Thyroid gland (tissue), 4 donors: ENCODE measurements at regions of chr11 and their contacts with region 1.

Region 1: DNA sequence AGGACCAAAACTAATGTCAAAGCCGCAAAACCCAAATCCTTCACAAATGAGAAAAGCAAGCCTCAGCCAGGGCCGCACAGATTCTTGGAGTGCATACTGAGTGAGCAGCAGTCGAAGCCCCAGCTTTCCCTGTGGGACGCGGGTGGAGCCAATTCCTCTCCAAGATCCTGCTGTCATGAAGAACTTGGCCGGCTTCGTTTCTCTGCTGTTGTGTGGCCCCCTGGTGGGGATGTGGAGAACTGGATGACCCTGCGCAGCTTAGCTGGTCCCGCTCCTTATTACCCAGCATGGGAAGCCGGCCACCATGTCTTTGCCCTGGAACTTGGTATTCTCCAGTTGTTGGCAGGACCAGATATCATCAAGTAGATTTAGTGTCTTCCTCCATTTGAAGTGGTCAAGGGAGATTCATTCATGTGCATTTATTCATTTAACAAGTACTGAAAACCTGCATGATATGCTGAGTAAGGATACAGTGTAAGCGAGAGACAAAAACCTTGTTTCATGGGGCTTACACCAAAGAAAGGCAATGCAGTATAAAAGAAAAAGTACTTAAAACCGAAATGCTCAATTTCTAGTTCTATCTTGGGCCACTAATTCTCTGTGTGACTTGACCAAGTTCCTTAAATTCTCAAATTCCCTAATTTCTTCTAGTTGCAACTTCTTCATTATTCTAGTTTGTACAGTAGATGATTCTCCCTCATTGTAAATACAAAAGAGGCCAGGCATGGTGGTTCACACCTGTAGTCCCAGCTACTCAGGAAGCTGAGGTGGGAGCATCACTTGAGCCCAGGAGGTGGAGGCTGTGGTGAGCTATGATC is 56.7 kb upstream of the CRTAM start:
- DNase-seq: peak; percentile 91 to 92
- H3K4me3 ChIP-seq: no peak overlapping the region
- H3K27ac ChIP-seq: no peak overlapping the region
- H3K4me1 ChIP-seq: peaks cover 0 to 6% of the 10 kb centered on the region in 2 donors
- H3K27me3 ChIP-seq: no peaks in the 10 kb centered on the region
- CTCF ChIP-seq: peak; percentile 82 to 96 (median 91)
- POLR2A ChIP-seq: no peak

Region 2: GRCh38 chr11:122578168-122578825 is 203.3 kb before region 1 on chr11:
- intact Hi-C with region 1: loop called (anchors 2 kb)
- DNase-seq: no peak
- H3K4me3 ChIP-seq: no peak overlapping the region
- H3K27ac ChIP-seq: no peak overlapping the region
- H3K4me1 ChIP-seq: peaks cover 4 to 5% of the 10 kb centered on the region in 2 donors
- H3K27me3 ChIP-seq: no peaks in the 10 kb centered on the region
- CTCF ChIP-seq: no peak
- POLR2A ChIP-seq: no peak

Region 3: DNA sequence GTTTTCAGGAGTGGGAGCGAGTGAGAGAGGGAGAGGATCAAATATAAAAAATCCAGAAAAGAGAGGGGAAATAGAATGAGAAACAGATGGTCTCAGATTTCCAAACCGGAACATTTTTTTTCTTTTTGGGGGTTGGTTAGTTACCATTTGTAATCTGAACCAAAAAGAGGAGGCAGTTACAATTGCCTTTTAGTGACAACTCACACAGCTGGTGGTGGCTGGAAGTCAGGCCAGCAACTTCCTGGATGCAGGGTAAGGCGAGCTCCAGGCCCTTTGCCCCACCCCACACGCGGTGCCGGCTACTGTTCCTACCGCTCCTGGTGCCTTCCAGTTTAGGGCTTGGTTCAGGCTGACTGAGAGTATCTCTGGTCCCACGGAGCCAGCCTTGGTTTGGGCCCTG is 147.1 kb before region 1 on chr11:
- intact Hi-C with region 1: loop called (anchors 2 kb)
- DNase-seq: no peak
- H3K4me3 ChIP-seq: no peak overlapping the region
- H3K27ac ChIP-seq: no peak overlapping the region
- H3K4me1 ChIP-seq: peaks cover 0 to 3% of the 10 kb centered on the region in 2 donors
- H3K27me3 ChIP-seq: no peaks in the 10 kb centered on the region
- CTCF ChIP-seq: no peak
- POLR2A ChIP-seq: no peak

Region 4: DNA sequence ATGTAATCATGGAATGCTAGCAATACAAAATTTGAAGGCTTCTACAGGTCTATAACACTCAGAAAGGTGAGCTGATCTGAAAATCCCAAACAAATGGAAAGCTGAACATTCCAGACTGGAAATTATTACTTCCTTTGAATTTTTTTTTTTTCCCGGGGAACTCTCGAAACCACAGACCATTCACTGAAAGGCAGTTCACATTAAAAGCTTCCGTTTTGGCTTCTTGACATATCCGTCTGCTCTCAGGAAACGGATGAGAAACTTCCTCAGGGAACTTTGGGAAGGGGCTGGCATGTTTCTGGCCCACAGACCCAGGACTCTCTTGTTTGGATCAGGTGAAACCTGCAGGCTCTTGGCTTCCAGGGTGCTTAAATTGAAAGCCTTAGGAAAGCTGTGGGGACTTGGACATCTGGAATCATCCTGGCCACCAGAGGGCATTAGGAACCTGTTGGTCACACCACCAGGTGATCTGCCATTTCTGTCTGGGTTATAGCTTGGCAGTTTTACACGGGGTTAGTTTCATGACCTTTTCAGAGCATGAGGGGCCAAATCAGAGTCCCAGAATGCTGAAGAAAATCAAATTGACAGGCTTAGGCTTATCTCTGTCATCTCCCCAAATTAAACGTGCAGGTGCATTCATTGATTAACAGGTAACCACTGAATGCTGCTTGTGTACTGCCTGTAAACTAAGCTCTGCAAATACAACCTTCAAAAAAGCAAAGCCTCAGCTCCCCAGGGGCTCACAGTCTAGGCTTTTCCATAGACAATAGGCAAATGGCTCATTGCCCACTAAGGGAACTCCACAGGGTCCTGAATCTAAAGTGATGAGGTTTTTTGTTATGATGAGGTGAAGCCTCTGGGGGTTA is 625.8 kb after region 1 on chr11:
- intact Hi-C with region 1: no loop called
- DNase-seq: peak; percentile 81 to 82
- H3K4me3 ChIP-seq: no peak overlapping the region
- H3K27ac ChIP-seq: peak overlapping the region; percentile 22 to 66 (median 56)
- H3K4me1 ChIP-seq: peaks cover 22 to 25% of the 10 kb centered on the region in 2 donors
- H3K27me3 ChIP-seq: no peaks in the 10 kb centered on the region
- CTCF ChIP-seq: peak; percentile 27 to 77 (median 70)
- POLR2A ChIP-seq: no peak